H1 (cell line): ENCODE measurements at regions of chr7 and their contacts with region 1.

Region 1: GRCh38 chr7:17706734-17707133 is 233.6 kb downstream of the SNX13 start:
- DNase-seq: peak in 1 of 2 experiments; percentile 54
- H3K4me3 ChIP-seq: no peak overlapping the region
- H3K27ac ChIP-seq: no peak overlapping the region
- H3K4me1 ChIP-seq: no peaks in the 10 kb centered on the region; a peak in 1 of 7 replicates
- H3K27me3 ChIP-seq: no peaks in the 10 kb centered on the region
- CTCF ChIP-seq: peak; percentile 31 to 79 (median 72)
- EP300 ChIP-seq: no peak
- POLR2A ChIP-seq: no peak
- RAD21 ChIP-seq: peak; percentile 96 to 97

Region 2: GRCh38 chr7:17370092-17370491 is 336.6 kb before region 1 on chr7:
- CTCF ChIA-PET with region 1: no interaction called
- POLR2A ChIA-PET with region 1: no interaction called
- DNase-seq: no peak
- H3K4me3 ChIP-seq: no peak overlapping the region
- H3K27ac ChIP-seq: no peak overlapping the region
- H3K4me1 ChIP-seq: no peaks in the 10 kb centered on the region
- H3K27me3 ChIP-seq: no peaks in the 10 kb centered on the region
- CTCF ChIP-seq: no peak
- EP300 ChIP-seq: no peak
- POLR2A ChIP-seq: no peak
- RAD21 ChIP-seq: no peak

Region 3: DNA sequence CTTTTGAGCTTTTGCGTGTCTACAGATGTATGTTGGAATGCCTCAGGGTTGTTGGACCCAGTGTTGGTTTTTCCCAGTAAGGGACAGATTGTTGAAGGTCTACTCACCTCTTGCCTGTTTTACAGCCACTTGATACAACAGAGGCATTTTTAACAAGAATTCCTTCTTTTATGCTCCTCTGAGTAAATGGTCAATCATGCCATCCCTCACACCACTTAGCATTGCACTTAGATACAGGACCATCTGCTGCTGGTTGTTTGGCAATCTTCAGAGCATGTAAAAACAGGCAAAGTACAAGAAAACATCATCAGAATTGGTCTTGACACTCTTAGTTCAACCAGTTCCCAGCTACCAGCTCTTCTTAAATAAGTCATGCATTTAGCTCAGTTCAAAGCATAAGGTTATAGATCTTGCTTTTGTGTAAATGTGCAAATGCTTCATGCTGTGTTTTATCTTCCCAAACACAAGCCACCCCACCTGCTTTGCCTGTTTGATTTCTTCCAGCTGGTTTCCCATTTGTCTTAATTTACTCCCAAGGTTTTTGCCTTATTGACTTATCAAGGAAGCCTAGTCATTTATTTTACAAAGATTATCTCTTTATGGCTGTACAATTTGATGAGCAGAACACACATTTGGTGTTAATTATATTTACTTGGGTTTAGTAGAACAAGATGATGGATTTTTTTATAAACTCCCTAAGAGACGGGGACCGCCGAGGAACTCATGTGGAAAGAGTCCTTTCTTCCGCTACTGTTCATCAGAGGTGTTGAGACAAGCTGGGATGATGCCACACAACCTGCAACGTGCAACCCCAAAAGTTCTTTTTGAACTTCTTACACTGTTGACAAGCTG is 271.7 kb before region 1 on chr7:
- CTCF ChIA-PET with region 1: no interaction called
- POLR2A ChIA-PET with region 1: no interaction called
- DNase-seq: no peak
- H3K4me3 ChIP-seq: no peak overlapping the region
- H3K27ac ChIP-seq: no peak overlapping the region
- H3K4me1 ChIP-seq: no peaks in the 10 kb centered on the region
- H3K27me3 ChIP-seq: no peaks in the 10 kb centered on the region
- CTCF ChIP-seq: no peak
- EP300 ChIP-seq: no peak
- POLR2A ChIP-seq: no peak
- RAD21 ChIP-seq: no peak

Region 4: DNA sequence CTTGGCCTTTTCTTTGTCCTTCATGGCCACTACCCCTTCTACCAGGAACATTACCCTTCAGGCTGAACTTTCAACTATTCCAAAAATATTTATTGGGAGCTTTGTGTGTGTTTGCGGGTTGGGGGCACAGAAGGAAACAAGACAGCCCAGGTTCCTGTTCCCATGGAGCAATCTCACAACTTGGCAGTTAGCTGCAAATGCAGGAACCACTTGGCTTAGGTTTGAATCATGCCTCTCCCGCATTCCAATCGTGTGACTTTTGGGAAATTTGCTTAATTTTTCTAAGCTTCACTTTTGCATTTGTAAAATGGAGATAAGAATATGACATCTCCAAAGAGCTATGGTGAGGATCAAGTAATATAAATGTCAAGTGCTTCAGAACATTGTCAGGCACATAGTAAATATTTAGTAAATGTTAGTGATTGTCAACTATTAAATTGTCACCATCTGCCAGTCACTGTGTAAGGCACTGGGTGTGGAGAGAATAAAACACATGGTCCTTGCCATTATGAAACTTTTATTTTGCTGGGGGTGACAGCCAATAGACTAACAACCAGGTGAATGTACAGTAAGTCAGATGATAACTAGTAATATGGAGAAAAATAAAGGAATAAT is 43.6 kb before region 1 on chr7:
- CTCF ChIA-PET with region 1: no interaction called
- POLR2A ChIA-PET with region 1: no interaction called
- DNase-seq: no peak
- H3K4me3 ChIP-seq: no peak overlapping the region
- H3K27ac ChIP-seq: no peak overlapping the region
- H3K4me1 ChIP-seq: peaks cover 0 to 3% (median 1%) of the 10 kb centered on the region in 4 experiments; a peak in 2 of 7 replicates
- H3K27me3 ChIP-seq: no peaks in the 10 kb centered on the region
- CTCF ChIP-seq: no peak
- EP300 ChIP-seq: no peak
- POLR2A ChIP-seq: no peak
- RAD21 ChIP-seq: no peak

Region 5: DNA sequence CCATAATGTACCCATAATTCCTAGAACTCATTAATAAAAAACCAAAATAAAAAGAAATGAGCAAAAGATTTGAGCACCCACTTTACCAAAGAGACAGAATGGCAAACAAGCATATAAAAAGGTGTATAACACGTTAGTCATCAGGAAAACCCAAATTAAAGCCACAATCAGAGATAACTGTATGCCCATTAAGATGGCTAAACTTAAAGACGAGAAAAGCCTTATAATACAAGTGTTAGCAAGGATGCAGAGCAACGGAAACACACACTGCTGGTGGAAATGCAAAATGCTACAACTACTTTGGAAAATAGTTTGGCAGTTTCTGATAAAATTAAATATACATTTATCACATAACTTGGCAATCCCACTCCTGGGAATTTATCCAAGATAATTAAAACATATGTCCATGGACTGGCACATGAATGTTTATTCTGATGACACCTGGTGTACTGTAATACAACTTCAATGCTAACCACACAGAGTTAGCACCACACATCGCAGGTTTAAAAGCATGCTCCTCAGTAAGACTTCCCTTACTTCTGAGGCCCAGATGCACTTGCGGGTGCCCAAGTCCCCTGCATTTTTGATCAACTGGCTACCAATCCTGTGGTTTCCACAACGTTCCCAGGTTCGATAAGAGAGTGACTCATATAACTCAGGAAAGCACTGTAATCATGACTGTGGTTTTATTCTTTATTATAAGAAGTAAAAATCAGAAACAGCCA is 74.9 kb after region 1 on chr7:
- CTCF ChIA-PET with region 1: no interaction called
- POLR2A ChIA-PET with region 1: no interaction called
- DNase-seq: no peak
- H3K4me3 ChIP-seq: no peak overlapping the region
- H3K27ac ChIP-seq: no peak overlapping the region
- H3K4me1 ChIP-seq: no peaks in the 10 kb centered on the region
- H3K27me3 ChIP-seq: no peaks in the 10 kb centered on the region
- CTCF ChIP-seq: no peak
- EP300 ChIP-seq: no peak
- POLR2A ChIP-seq: no peak
- RAD21 ChIP-seq: no peak

Region 6: DNA sequence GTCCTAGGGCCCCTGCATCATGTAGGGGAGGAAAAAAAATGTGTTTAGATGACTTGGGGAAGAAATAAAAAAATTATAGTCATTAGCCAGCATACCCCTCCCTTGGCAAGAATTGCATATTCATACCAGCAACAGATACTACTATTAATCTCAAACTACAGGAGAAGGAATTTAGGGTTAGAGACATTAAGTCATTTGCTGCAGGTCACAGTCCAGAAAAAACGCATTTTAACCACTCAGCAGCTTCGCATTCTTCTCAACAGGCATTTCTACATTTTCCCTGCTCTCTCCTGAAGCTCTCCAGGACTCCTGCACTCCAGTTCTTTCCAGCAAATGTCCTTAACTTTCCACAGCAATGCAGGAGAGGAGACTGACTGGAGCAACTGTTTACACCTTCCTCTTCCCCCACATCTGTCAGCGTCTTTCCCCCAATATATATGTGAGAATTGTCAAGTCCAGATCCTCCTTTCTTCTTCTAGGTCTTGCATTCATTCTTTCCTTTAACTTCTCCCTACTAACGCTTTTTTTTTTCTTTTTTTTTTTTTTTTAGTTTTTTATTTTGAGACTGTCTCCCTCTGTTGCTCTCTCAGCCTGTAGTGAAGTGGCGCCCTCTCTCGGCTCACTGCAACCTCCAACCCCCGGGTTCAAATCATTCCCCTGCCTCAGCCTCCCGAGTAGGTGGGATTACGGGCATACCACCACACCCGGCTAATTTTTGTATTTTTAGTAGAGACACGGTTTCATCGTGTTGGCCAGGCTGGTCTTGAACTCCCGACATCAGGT is 285.3 kb after region 1 on chr7:
- CTCF ChIA-PET with region 1: interaction called, 22 read pairs
- POLR2A ChIA-PET with region 1: no interaction called
- DNase-seq: peak in 1 of 2 experiments; percentile 79
- H3K4me3 ChIP-seq: no peak overlapping the region
- H3K27ac ChIP-seq: no peak overlapping the region
- H3K4me1 ChIP-seq: no peaks in the 10 kb centered on the region
- H3K27me3 ChIP-seq: no peaks in the 10 kb centered on the region
- CTCF ChIP-seq: peak; percentile 47 to 67 (median 64)
- EP300 ChIP-seq: no peak
- POLR2A ChIP-seq: no peak
- RAD21 ChIP-seq: peak; percentile 73